BJ (cell line): ENCODE measurements at regions of chr9 and their contacts with region 1.

Region 1: DNA sequence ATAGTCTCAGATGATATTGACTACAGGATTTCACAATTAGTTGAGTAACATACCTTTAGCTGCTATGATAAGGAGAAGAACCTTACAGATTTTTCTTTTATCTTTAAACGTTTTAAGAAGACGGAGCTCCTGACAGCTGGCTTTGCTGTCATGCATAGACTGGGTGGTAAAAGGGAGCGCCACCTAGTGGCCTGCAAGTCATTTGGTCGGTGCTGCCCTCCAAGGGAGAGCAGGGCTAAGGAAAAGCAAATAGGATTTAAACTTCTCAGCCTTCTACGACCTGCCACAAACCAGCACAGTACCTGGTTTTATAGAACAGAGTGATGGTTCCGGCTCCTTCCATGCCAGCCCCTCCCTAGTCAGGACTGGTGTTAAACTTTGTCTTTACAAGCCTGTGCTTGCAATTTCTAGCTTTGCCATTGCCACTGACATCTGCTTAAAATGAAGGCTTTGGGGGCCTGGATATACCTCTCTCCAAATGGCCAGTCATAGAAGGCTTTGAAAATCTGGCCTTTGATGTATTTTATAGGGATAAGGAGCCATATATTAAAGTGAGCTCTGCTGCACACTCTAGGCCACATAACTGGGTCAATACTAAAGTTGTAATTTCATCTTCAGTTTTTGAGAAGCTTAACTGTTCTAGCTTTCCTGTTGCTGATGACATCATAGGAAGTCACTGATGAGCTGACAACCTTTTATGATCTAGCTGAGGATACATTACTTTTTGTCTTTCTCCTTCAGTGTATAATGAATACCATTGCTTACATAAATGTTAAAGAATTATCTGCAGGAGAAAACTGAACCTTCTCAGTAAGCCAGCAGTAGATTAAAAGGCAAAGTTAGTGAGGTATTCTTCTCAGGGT is 31.1 kb upstream of the ADAMTSL1 start:
- DNase-seq: no peak
- H3K4me3 ChIP-seq: no peak overlapping the region
- H3K27me3 ChIP-seq: no peaks in the 10 kb centered on the region
- CTCF ChIP-seq: peak; percentile 91

Region 2: GRCh38 chr9:18263367-18263766 is 179.5 kb before region 1 on chr9:
- CTCF ChIA-PET with region 1: interaction called, 85 read pairs
- POLR2A ChIA-PET with region 1: no interaction called
- DNase-seq: no peak
- H3K4me3 ChIP-seq: no peak overlapping the region
- H3K27me3 ChIP-seq: no peaks in the 10 kb centered on the region
- CTCF ChIP-seq: no peak

Region 3: GRCh38 chr9:18268381-18268780 is 174.5 kb before region 1 on chr9:
- CTCF ChIA-PET with region 1: interaction called, 14 read pairs
- POLR2A ChIA-PET with region 1: no interaction called
- DNase-seq: no peak
- H3K4me3 ChIP-seq: no peak overlapping the region
- H3K27me3 ChIP-seq: no peaks in the 10 kb centered on the region
- CTCF ChIP-seq: no peak

Region 4: GRCh38 chr9:18423791-18424531 is 18.9 kb before region 1 on chr9:
- CTCF ChIA-PET with region 1: interaction called, 19 read pairs
- POLR2A ChIA-PET with region 1: no interaction called
- DNase-seq: no peak
- H3K4me3 ChIP-seq: no peak overlapping the region
- H3K27me3 ChIP-seq: no peaks in the 10 kb centered on the region
- CTCF ChIP-seq: no peak

Region 5: DNA sequence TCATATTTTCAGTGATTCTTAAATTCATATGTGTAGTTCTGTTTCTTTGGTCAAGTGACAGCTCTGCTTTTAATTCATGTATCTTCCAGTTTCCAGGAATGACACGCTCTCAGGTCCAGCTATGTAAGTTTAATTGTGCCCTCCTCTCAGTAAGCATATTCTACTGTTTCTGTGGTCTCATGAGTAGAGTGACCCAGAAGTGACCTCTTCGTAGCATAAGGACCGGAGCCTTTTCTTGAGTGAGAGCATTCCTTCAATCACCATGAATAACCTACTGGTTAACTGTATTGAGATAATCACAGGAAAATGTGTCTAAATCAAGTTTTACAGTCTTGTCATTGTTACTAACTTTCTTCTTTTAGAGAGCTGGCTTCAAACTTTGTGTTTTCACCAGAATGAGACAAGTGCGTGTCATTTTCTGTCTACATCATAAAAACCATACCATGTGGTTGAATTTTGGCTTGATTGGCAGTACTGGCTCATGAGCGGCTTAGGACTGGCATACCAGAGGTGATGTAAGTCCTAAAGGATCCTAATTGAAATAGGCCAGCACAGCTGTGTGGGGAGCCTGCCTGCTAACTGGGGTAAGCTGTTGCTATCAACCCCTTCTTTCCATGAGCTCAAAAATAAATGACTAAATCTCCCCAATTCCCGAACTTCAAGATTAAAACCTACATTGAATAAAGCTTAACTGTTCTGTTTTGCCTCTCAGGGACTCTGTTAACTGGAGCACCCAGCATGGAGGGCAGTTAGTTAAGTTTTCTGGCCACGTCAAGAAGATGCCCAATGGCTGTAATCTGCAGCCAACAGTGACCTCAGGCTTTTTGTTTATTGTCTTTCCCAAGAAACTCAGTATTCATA is 35.9 kb after region 1 on chr9:
- CTCF ChIA-PET with region 1: interaction called, 16 read pairs
- POLR2A ChIA-PET with region 1: interaction called, 3 read pairs
- DNase-seq: no peak
- H3K4me3 ChIP-seq: no peak overlapping the region
- H3K27me3 ChIP-seq: no peaks in the 10 kb centered on the region
- CTCF ChIP-seq: no peak